Activated naive CD4-positive, alpha-beta T cell treated with anti-CD3 and anti-CD28 coated beads, Interleukin-2, amount 10 ng/mL, durations not matched to agents 7 days and 5 days (primary cell): ENCODE measurements at regions of chr4 and their contacts with region 1.

Region 1: DNA sequence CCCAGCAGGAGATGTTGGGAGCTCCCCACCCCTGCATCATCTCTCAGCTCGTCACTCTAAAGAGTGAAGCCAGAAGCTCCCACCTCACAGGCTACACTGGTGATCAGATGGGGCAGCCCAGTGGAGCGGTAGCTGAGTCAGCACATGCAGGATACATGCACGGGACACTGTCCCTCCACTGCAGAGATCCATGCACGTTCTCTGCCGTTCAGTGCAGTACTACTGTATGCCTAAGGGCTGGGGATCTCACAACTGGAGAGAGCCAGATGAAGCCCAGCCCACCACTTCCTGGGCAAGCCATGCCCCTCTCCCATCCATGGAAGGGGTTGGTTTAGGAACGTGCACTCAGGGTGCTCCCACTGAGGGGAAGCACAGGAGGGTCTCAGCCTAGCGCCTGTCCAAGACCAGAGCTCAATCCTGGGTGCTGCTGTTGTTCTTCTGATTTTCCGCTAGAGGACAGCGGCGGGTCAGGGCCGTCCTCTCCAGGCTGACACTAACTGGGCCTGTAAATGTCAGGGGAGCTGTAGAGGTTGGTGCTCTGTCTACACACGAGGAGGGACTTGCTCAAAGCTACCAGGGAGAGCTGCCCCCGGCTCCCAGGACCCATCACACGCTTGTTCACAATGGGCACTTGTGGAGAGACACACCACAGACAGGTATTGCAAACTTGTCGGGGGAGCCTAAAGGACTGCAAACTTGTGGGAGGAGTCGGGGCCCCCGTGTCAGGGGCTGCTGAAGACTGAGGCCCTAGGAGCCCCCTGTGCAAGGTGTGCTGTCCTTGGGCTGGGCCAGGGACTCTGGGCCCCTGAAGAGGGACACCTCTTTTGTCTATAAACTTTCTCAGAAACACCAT is 18.2 kb upstream of the ABLIM2 start:
- DNase-seq: peak; percentile 58
- H3K4me3 Mint-ChIP-seq: no peak overlapping the region
- H3K27ac Mint-ChIP-seq: no peak overlapping the region
- H3K4me1 Mint-ChIP-seq: no peaks in the 10 kb centered on the region
- H3K27me3 Mint-ChIP-seq: peaks cover 17% of the 10 kb centered on the region

Region 2: GRCh38 chr4:8192748-8193738 is 16.3 kb after region 1 on chr4:
- CTCF ChIA-PET with region 1: interaction called, 15 read pairs
- DNase-seq: peak; percentile 57
- H3K4me3 Mint-ChIP-seq: no peak overlapping the region
- H3K27ac Mint-ChIP-seq: peak overlapping the region; percentile 7
- H3K4me1 Mint-ChIP-seq: peaks cover 2% of the 10 kb centered on the region
- H3K27me3 Mint-ChIP-seq: peaks cover 39% of the 10 kb centered on the region

Region 3: GRCh38 chr4:8201321-8201781 is 24.6 kb after region 1 on chr4:
- CTCF ChIA-PET with region 1: interaction called, 10 read pairs
- DNase-seq: peak; percentile 58
- H3K4me3 Mint-ChIP-seq: peak overlapping the region; percentile 86
- H3K27ac Mint-ChIP-seq: peak overlapping the region; percentile 37
- H3K4me1 Mint-ChIP-seq: peaks cover 42% of the 10 kb centered on the region
- H3K27me3 Mint-ChIP-seq: peaks cover 10% of the 10 kb centered on the region

Region 4: DNA sequence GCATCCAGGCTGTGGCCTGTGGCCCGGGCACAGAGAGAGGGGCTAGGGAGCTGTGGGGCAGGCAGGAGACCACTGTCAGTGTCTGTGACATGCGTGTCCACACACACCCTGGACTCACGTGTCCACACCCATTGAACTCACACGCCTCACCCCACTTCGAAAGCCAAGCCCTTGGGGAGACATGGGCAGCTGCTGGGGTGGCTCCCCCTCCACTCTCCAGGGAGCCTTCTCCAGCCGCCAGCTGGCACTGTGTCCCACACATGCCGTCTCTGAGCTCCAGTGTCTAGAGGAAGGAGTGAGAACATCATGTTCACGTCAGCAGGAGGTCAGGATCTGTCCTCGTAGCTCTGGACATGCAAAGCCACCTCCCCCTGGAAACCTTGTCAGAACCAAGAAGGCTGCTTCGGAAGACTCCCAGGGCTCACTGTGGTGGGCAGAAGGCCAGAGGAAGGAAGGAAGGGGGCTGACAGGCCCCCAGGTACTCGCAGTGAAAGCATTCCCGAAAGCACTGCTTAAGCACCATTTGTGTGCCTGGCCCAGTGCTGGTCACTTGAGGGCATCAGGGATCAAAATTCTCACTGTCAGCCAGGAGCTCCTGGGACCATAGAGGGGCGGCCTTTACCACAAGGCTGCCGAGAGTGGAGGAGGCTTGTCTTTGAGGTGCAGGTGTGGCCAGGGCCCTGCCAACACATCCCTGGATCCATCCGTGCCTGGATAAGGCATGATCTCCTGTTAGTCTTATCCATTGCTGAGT is 154.2 kb after region 1 on chr4:
- CTCF ChIA-PET with region 1: no interaction called
- DNase-seq: no peak
- H3K4me3 Mint-ChIP-seq: no peak overlapping the region
- H3K27ac Mint-ChIP-seq: no peak overlapping the region
- H3K4me1 Mint-ChIP-seq: no peaks in the 10 kb centered on the region
- H3K27me3 Mint-ChIP-seq: peaks cover 5% of the 10 kb centered on the region

Region 5: DNA sequence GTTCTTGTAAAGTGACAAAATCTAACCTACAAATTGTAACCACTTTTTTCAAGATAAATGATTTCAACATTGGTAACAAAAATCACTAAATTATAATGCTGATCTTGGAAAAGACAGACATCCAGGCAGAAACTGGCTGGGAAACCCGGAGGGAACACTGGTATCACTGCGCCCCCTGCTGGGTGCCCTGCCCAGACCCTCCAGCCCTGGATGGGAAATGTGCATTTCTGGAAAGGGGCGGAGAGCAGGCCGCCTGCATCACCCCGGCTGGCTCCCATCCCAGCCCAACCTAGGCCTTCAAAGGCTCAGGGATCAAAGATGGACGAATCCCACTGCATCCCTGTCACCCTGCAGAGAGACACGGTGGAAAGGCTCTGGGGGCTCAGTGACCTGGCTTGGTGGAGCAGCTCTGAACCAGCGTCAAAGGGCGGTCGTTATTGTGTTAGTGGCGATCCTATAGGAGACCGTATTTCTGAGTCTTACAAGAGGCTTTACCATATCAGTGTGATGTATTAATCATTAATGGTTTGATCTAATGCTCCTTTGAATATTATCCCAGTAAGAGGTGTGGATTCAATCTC is 226.5 kb after region 1 on chr4:
- CTCF ChIA-PET with region 1: interaction called, 29 read pairs
- DNase-seq: peak; percentile 63
- H3K4me3 Mint-ChIP-seq: no peak overlapping the region
- H3K27ac Mint-ChIP-seq: no peak overlapping the region
- H3K4me1 Mint-ChIP-seq: no peaks in the 10 kb centered on the region
- H3K27me3 Mint-ChIP-seq: no peaks in the 10 kb centered on the region

Region 6: GRCh38 chr4:8410641-8411271 is 234.0 kb after region 1 on chr4:
- CTCF ChIA-PET with region 1: interaction called, 29 read pairs
- DNase-seq: no peak
- H3K4me3 Mint-ChIP-seq: no peak overlapping the region
- H3K27ac Mint-ChIP-seq: no peak overlapping the region
- H3K4me1 Mint-ChIP-seq: peaks cover 22% of the 10 kb centered on the region
- H3K27me3 Mint-ChIP-seq: no peaks in the 10 kb centered on the region